IMR-90 (cell line): ENCODE measurements at regions of chr2 and their contacts with region 1.

Region 1: GRCh38 chr2:160109936-160110673 is 47.7 kb upstream of the PLA2R1 start:
- DNase-seq: peak; percentile 80
- ATAC-seq: peak; percentile 97
- H3K4me3 ChIP-seq: no peak overlapping the region
- H3K27ac ChIP-seq: no peak overlapping the region
- H3K4me1 ChIP-seq: no peaks in the 10 kb centered on the region
- H3K27me3 ChIP-seq: peaks cover 2% of the 10 kb centered on the region; the same call in 1 of the 2 replicates
- CTCF ChIP-seq: peak; percentile 92
- POLR2A ChIP-seq: 0 out of 2 replicates have a peak, but pooled peaks have one; percentile 35
- RAD21 ChIP-seq: peak; percentile 99

Region 2: DNA sequence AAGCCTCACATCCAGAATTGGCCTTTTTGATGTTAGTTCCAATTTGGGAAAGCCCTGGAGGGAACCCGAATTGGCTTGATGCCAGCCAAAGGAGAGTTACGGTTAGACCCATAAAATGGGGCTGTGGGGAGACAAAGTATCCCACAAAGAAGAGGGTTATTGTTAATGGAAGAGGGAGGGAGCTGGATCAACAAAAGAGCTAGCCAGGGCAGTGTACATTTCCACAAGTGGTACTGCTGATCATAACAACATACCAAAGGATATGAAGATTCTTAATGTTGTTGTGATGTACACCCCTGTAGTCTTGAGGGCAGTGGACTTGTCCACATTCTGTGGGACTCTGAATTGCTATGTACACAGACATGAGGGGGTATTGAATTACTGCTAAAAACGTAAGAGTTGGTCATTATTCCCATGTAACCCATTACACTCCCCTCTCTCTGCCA is 1136.6 kb before region 1 on chr2:
- CTCF ChIA-PET with region 1: no interaction called
- POLR2A ChIA-PET with region 1: no interaction called
- dilution Hi-C with region 1: no loop called
- in situ Hi-C with region 1: no loop called
- intact Hi-C with region 1: no loop called
- DNase-seq: peak; percentile 51
- ATAC-seq: no peak
- H3K4me3 ChIP-seq: no peak overlapping the region
- H3K27ac ChIP-seq: no peak overlapping the region
- H3K4me1 ChIP-seq: peaks cover 10% of the 10 kb centered on the region
- H3K27me3 ChIP-seq: no peaks in the 10 kb centered on the region
- CTCF ChIP-seq: no peak
- POLR2A ChIP-seq: no peak
- RAD21 ChIP-seq: no peak

Region 3: GRCh38 chr2:159904127-159904958 is 205.8 kb before region 1 on chr2:
- CTCF ChIA-PET with region 1: no interaction called
- POLR2A ChIA-PET with region 1: no interaction called
- dilution Hi-C with region 1: no loop called
- in situ Hi-C with region 1: no loop called
- intact Hi-C with region 1: no loop called
- DNase-seq: no peak
- ATAC-seq: no peak
- H3K4me3 ChIP-seq: no peak within 1 kb of the TSS
- H3K27ac ChIP-seq: no peak within 1 kb of the TSS
- H3K4me1 ChIP-seq: no peaks in the 10 kb centered on the region
- H3K27me3 ChIP-seq: peaks cover 48% of the 10 kb centered on the region
- CTCF ChIP-seq: no peak
- POLR2A ChIP-seq: no peak
- RAD21 ChIP-seq: no peak

Region 4: DNA sequence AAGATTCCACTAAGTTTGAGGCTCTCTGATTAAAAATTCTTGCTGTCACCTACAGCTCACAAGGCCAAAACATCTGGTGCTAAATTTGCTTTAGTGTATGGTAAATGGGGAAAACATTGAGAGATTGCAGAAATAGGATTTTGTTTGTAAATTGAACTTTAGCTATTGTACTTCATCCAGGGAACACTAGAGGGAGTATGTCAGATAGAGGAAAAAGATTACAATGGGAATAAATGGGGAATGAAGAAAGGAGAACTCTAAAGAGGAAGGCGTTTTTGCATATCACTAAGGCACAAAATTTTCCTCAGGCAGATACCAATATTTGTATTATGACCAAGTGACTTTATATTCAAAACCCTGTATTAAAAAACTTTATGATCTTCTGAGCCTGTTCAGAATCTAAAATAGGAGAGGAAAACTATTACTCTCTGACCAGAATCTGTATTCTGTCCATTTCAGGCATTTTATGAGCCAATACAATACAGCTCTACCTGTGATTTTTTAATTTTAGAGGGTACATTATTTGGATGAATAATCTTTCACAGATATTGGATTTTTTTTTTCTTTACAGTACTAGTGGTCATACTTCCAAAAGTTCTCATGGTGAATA is 142.3 kb after region 1 on chr2:
- CTCF ChIA-PET with region 1: interaction called, 6 read pairs
- POLR2A ChIA-PET with region 1: no interaction called
- dilution Hi-C with region 1: no loop called
- in situ Hi-C with region 1: loop called (anchors 5 kb)
- intact Hi-C with region 1: loop called (anchors 5 kb)
- DNase-seq: peak; percentile 44
- ATAC-seq: peak; percentile 76
- H3K4me3 ChIP-seq: no peak overlapping the region
- H3K27ac ChIP-seq: no peak overlapping the region
- H3K4me1 ChIP-seq: peaks cover 6% of the 10 kb centered on the region
- H3K27me3 ChIP-seq: no peaks in the 10 kb centered on the region
- CTCF ChIP-seq: peak; percentile 69
- POLR2A ChIP-seq: no peak
- RAD21 ChIP-seq: peak; percentile 66

Region 5: DNA sequence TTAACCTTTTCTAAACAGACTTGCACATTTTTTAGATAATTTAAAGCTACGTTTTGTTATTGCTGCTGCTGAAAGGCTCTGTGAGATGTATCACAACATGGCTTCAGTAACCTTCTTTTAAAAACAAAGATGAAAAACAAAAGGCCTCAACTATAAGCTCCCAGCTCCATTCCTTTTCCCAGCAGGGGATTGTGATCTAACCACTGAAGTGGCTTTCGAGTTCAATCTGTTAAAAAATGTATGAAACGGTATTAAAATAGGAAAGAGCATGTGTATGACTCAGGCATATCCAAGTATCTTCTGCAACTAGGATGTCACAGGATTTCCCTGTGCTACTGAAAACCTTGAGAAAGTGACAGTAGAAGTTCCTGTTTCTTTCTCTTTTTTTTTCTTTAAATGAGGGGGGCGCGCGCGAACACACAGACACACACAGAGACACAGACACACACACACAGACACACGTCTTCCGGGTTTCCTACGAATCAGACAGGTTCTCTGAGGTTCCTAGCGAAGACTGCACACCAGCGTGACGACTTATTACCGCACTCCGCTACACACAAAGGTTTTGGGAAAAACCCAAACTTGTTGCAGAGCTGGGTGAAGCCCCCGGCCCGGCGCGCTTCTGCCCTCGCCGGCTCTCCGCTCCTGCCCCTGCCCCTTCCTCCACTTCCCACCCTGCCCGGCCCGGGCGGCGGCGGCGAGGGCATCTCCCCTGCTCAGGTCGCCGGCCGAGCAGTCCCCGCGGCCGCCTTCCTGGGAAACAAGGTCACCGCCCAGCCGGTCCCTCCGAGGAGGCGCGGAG is 296.7 kb after region 1 on chr2:
- CTCF ChIA-PET with region 1: no interaction called
- POLR2A ChIA-PET with region 1: interaction called, 5 read pairs
- dilution Hi-C with region 1: no loop called
- in situ Hi-C with region 1: no loop called
- intact Hi-C with region 1: loop called (anchors 10 kb)
- DNase-seq: peak; percentile 80
- ATAC-seq: peak; percentile 12
- H3K4me3 ChIP-seq: peak overlapping the region; percentile 99
- H3K27ac ChIP-seq: peak overlapping the region; percentile 89
- H3K4me1 ChIP-seq: peaks cover 35% of the 10 kb centered on the region
- H3K27me3 ChIP-seq: no peaks in the 10 kb centered on the region
- CTCF ChIP-seq: no peak
- POLR2A ChIP-seq: peak; percentile 49
- RAD21 ChIP-seq: 0 out of 2 replicates have a peak, but pooled peaks have one; percentile 1

Region 6: DNA sequence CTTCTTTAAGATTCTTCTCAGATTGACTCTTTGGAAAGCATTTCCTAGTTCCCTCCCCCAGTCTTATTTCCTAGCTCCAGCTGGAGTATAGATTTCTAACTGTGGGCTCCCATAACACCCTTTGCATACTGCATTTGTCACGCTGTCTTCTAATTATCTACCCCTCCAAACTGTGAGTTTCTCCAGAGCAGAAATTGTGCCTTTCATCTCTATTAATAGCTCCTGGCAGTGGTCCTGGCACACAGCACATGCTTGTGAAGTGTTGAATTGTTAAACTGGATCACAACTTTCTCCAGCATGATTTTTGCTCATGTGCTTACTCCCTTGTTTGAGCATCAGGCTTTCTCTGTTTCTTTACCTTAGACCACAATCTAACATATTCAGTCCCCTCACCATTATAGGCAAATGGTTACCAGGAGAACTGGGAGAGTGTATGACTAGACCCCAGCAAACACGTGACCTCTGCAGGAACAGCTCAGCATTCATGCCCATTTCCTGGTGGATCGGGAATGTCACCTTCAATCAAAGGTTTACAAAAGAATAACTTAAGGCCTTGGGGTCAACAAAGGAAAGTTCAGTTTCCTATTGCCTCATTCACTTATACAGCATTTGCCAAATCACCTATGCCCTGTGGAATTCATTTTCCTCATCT is 874.4 kb after region 1 on chr2:
- CTCF ChIA-PET with region 1: no interaction called
- POLR2A ChIA-PET with region 1: no interaction called
- dilution Hi-C with region 1: no loop called
- in situ Hi-C with region 1: loop called (anchors 10 kb)
- intact Hi-C with region 1: no loop called
- DNase-seq: no peak
- ATAC-seq: no peak
- H3K4me3 ChIP-seq: no peak overlapping the region
- H3K27ac ChIP-seq: no peak overlapping the region
- H3K4me1 ChIP-seq: no peaks in the 10 kb centered on the region
- H3K27me3 ChIP-seq: no peaks in the 10 kb centered on the region
- CTCF ChIP-seq: no peak
- POLR2A ChIP-seq: no peak
- RAD21 ChIP-seq: no peak

Region 7: DNA sequence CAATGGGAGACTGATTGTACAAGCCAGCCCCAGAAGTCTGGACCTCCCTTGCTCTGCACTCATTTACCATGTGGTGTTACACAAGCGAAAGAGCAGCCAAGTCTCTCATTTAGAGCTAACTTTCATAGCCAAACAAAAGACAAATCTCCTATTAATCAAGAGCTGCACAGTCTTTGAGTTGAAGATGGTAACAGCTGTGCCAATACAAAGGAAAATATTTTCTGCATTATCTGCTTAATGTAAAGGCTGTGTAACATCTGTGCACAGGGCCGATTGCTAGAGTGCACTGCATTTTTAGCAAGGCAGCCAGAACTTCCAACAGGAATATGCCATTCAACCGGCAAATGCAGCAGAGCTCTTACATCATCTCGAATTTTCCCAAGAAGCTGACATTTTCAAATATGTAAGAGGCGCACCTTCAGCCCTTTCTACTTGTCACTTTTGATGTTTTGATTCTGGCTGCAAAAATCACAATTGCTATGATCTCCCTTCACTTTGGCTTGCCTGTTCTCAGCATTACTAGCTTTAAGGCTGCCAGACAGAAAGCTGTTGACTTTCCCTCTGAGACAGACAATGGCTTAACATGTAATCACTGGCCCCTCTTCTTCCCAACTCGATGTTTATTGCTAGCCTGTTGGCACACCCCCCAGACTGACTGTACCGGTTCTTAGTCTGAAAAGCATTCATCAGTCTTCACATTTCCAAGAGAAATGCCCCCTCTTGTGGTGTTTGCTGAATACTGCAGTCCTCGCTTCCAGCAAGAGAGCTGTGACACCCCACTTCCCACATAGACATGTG is 953.3 kb after region 1 on chr2:
- CTCF ChIA-PET with region 1: interaction called, 4 read pairs
- POLR2A ChIA-PET with region 1: no interaction called
- dilution Hi-C with region 1: no loop called
- in situ Hi-C with region 1: no loop called
- intact Hi-C with region 1: loop called (anchors 5 kb)
- DNase-seq: peak; percentile 86
- ATAC-seq: peak; percentile 95
- H3K4me3 ChIP-seq: no peak overlapping the region
- H3K27ac ChIP-seq: no peak overlapping the region
- H3K4me1 ChIP-seq: peaks cover 6% of the 10 kb centered on the region
- H3K27me3 ChIP-seq: no peaks in the 10 kb centered on the region; the same call in 1 of the 2 replicates
- CTCF ChIP-seq: peak; percentile 90
- POLR2A ChIP-seq: peak; percentile 41; the same call in 1 of the 2 replicates
- RAD21 ChIP-seq: peak; percentile 92